ENCODE measurements at regions of chr1 and their contacts with region 1.

Region 1: DNA sequence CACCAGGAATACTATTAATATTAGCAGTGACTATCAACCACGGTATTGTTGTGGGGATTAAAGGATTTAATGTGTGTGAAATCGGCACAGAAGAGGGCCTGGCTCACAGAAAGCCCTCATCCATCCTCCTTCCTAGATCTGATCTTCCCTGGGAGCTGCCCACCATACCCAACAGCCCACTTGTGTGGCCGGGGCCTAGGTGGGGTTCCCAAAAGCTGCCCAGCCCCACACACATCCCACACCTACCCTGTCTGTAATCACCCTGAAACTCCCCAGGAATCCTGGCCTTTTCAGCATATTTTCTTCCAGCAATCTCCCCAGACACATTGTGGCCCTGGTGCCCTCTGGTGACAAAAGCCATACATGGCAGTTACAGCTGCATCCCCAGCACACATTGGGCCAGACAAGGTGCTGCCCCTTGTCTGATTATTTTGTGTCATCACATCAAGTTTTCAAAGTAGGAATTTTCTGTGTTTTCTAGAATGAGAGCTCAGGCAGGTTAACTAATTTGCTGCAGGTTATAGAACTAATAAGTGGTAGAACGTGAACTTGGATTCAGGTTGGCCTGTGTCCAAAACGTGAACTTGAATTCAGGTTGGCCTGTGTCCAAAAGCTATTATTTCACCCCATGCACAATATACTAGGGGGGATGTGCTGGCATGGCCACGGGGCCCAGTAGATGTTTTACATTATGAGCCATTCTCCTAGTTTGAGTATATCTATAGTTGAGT is 5.3 kb upstream of the SLC6A9 start:
- H3K4me3 Mint-ChIP-seq: no peak overlapping the region
- H3K27ac Mint-ChIP-seq: no peak overlapping the region
- H3K4me1 Mint-ChIP-seq: peaks cover 3% of the 10 kb centered on the region
- H3K27me3 Mint-ChIP-seq: peaks cover 17% of the 10 kb centered on the region

Region 2: DNA sequence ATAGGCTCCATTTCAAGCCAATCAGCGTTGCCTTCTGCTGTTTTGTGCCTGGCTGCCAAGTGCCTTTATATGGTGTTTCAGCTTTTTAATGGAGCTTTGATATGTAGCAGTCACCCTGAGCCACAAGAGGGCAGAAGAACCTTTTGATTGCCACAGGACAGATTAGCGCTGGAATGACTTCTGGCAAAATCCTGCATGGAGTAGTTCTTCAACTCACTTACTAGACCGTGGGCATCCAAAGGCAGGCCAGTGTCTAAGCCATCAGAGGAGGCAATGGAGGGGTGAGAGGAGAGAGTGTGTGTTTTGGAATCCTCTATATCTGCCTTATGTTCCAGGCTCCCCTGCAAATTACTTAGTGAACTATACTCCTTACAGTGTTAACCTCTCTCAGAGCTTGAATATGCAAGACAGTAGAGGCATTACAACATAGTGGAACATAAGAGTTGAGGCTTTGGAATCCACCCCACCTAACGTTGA is 273.0 kb before region 1 on chr1:
- intact Hi-C with region 1: loop called (anchors 1 kb)
- H3K4me3 Mint-ChIP-seq: no peak overlapping the region
- H3K27ac Mint-ChIP-seq: no peak overlapping the region
- H3K4me1 Mint-ChIP-seq: peaks cover 12% of the 10 kb centered on the region
- H3K27me3 Mint-ChIP-seq: no peaks in the 10 kb centered on the region

Region 3: DNA sequence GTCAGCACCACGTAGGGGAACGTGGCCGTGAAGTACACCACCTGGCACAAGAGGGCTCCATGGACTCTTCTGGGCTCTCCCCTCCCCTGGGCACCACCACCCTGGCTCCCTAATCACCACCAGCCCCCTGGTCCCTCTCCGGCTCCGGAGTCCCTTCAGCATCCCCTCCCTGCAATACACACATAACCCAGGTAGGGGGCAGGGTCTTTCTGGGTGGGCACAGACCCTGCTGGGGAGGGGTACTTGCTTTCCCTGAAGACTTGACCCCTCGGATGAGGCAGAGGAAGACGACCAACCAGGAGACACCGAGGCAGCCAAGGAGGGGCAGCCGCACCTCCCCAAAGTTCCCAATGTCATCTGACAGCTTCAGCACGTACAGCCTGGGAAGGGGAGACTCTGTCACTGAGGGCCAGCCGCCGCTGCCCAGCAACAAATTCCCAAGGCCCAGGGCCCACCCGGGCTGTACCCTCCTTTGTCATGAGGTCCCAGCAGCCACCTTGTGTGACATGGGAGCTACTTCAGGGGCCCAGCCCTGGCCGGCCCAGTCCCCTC is 33.9 kb before region 1 on chr1:
- intact Hi-C with region 1: loop called (anchors 1 kb)
- H3K4me3 Mint-ChIP-seq: no peak overlapping the region
- H3K27ac Mint-ChIP-seq: no peak overlapping the region
- H3K4me1 Mint-ChIP-seq: no peaks in the 10 kb centered on the region
- H3K27me3 Mint-ChIP-seq: peaks cover 2% of the 10 kb centered on the region